WTC11 (cell line): ENCODE measurements at regions of chr14 and their contacts with region 1.

Region 1: DNA sequence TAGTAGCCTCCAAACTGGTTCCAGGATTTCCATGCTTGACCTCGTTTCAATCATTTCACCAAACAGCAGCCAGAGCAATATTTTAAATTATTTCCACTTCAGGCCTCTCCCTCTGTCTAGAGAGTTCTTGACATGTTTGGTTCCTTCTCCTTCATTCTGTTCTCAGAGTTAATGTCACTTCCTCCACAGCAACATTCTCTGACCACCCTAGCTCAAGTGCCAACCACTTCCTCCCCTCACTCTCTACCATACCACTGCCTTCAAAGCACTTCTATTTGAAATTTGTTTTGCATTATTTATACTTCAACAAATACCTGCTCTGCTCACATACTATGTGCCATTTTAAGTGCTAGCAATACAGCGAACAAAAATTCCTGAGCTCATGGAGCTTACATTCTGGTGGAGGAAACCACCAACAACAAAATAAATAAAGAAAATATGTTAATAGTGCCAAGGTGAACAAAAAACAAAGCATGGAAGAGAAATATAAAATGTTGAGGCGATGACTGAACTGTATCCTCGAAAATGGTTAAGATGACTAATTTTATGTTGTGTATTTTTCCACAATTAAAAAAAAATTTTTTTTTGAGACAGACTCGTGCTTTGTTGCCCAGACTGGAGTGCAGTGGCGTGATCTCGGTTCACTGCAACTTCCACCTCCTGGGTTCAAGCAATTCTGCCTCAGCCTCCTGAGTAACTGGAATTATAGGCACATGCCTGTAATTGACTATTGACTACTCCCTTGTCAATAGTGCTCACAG is 17.3 kb downstream of the BAZ1A start:
- DNase-seq: no peak
- ATAC-seq: no peak
- H3K4me3 Mint-ChIP-seq: no peak overlapping the region
- H3K27ac Mint-ChIP-seq: peak overlapping the region; percentile 30; the same call in 1 of the 2 replicates
- H3K4me1 Mint-ChIP-seq: no peaks in the 10 kb centered on the region
- H3K27me3 Mint-ChIP-seq: no peaks in the 10 kb centered on the region
- CTCF ChIP-seq: no peak

Region 2: GRCh38 chr14:34592623-34593022 is 265.2 kb before region 1 on chr14:
- CTCF ChIA-PET with region 1: no interaction called
- POLR2A ChIA-PET with region 1: no interaction called
- DNase-seq: no peak
- ATAC-seq: no peak
- H3K4me3 Mint-ChIP-seq: no peak overlapping the region
- H3K27ac Mint-ChIP-seq: no peak overlapping the region
- H3K4me1 Mint-ChIP-seq: no peaks in the 10 kb centered on the region
- H3K27me3 Mint-ChIP-seq: no peaks in the 10 kb centered on the region
- CTCF ChIP-seq: no peak

Region 3: DNA sequence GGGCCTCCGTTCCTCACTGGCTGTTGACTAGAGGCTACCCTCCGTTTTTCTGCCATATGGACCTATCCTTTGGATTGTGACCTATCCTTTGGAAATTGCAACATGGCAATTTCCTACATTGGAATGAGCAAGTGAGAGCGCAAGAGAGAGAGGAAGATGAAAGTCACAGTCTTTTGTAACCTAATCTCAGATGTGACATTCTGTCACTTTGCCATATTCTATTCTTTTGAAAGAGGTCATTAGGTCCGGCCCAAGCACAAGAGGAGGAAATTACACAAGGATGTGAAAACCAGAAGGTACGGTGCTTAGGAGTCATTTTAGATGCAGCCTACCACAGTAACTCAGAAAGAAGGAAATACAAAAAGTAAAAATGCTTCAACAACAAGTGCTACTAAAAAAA is 77.6 kb after region 1 on chr14:
- CTCF ChIA-PET with region 1: no interaction called
- POLR2A ChIA-PET with region 1: no interaction called
- DNase-seq: no peak
- ATAC-seq: no peak
- H3K4me3 Mint-ChIP-seq: no peak overlapping the region
- H3K27ac Mint-ChIP-seq: no peak overlapping the region
- H3K4me1 Mint-ChIP-seq: no peaks in the 10 kb centered on the region
- H3K27me3 Mint-ChIP-seq: no peaks in the 10 kb centered on the region
- CTCF ChIP-seq: no peak

Region 4: DNA sequence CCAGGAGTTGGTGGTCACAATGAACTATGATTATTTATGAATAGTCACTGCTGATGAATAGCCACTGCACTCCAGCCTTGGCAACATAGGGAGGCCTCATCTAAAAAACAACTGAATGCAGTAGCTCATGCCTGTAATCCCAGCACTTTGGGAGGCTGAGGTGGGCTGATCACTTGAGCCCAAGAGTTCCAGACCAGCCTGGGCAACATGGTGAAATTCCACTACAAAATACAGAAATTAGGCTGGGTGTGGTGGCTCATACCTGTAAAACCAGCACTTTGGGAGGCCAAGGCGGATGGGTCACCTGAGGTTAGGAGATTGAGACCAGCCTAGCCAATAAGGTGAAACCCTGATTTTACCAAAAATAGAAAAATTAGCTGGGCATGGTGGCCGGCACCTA is 174.7 kb after region 1 on chr14:
- CTCF ChIA-PET with region 1: no interaction called
- POLR2A ChIA-PET with region 1: interaction called, 10 read pairs
- DNase-seq: no peak
- ATAC-seq: no peak
- H3K4me3 Mint-ChIP-seq: no peak overlapping the region
- H3K27ac Mint-ChIP-seq: no peak overlapping the region
- H3K4me1 Mint-ChIP-seq: no peaks in the 10 kb centered on the region
- H3K27me3 Mint-ChIP-seq: no peaks in the 10 kb centered on the region; the same call in 1 of the 2 replicates
- CTCF ChIP-seq: no peak